Tibial artery (tissue), 4 donors: ENCODE measurements at regions of chr3 and their contacts with region 1.

Region 1: DNA sequence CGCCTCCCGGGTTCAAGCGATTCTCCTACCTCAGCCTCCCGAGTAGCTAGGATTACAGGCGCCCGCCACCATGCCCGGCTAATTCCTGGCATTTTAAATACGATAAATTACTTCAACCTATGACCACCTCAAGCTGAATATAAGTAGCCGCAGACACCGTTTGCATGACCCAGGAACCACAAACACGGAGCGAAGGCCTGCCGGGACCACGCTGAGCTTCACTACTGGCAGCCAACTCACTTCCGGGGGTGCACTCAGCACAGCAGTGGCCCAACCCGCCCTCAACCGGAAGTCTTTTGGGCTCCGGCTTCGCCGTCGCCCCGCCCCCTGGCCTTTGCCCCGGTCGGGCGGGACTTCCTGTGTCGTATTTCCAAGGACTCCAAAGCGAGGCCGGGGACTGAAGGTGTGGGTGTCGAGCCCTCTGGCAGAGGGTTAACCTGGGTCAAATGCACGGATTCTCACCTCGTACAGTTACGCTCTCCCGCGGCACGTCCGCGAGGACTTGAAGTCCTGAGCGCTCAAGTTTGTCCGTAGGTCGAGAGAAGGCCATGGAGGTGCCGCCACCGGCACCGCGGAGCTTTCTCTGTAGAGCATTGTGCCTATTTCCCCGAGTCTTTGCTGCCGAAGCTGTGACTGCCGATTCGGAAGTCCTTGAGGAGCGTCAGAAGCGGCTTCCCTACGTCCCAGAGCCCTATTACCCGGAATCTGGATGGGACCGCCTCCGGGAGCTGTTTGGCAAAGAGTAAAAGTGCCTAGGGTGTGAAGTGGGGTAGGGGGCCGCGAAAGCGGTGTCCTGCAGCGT is at the start of gene TIMMDC1:
- DNase-seq: peak; percentile 97 to 98
- H3K4me3 ChIP-seq: peak within 1 kb of the TSS; percentile 78 to 94
- H3K27ac ChIP-seq: peak within 1 kb of the TSS; percentile 87 to 96
- H3K4me1 ChIP-seq: peaks cover 0 to 38% (median 27%) of the 10 kb centered on the region in 4 donors
- H3K27me3 ChIP-seq: no peaks in the 10 kb centered on the region
- CTCF ChIP-seq: no peak

Region 2: GRCh38 chr3:119388577-119388976 is 109.8 kb before region 1 on chr3:
- intact Hi-C with region 1: no loop called
- DNase-seq: no peak
- H3K4me3 ChIP-seq: no peak overlapping the region
- H3K27ac ChIP-seq: no peak overlapping the region
- H3K4me1 ChIP-seq: no peaks in the 10 kb centered on the region
- H3K27me3 ChIP-seq: no peaks in the 10 kb centered on the region
- CTCF ChIP-seq: no peak

Region 3: GRCh38 chr3:119676771-119677640 is 178.6 kb after region 1 on chr3 and contains the start of gene COX17:
- intact Hi-C with region 1: loop called (anchors 10 kb)
- DNase-seq: peak; percentile 93 to 96
- H3K4me3 ChIP-seq: peak within 1 kb of the TSS; percentile 62 to 85
- H3K27ac ChIP-seq: peak within 1 kb of the TSS; percentile 81 to 86
- H3K4me1 ChIP-seq: peaks cover 0 to 17% (median 7%) of the 10 kb centered on the region in 4 donors
- H3K27me3 ChIP-seq: no peaks in the 10 kb centered on the region
- CTCF ChIP-seq: no peak

Region 4: DNA sequence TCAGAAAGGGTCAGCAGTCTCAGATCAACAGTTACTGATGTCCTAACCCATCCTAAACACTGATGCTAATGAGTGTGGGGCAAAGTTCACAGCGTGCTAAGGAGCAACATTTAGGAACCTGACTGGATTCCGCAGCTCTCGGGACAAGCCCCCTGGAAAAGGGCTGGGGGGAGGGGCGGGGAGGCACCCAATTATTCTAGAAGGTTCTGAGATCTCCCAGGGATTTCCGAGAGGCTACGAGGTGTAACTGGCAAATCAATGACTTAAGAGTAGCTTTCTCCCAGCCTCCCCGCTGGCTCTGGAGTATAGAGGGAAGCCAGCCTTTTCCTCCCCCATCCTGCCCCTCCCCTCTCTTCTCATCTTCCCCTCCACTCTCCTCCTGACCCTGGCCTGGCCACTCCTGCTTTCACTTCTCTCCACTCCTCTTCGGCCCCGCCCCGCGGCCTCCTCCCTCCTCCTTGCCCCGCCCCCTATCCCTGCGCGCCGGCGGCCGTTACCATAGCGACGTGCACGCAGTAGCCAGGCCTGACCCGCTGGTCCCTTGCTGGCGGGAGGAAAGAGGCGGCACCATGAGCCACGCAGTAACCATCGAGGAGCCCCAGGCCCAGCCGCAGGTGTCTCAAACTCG is 204.3 kb after region 1 on chr3 and contains the start of gene CFAP91:
- intact Hi-C with region 1: loop called (anchors 5 kb)
- DNase-seq: peak; percentile 98
- H3K4me3 ChIP-seq: peak within 1 kb of the TSS; percentile 53 to 64
- H3K27ac ChIP-seq: peak within 1 kb of the TSS; percentile 49 to 58
- H3K4me1 ChIP-seq: peaks cover 0 to 18% (median 7%) of the 10 kb centered on the region in 4 donors
- H3K27me3 ChIP-seq: no peaks in the 10 kb centered on the region
- CTCF ChIP-seq: no peak

Region 5: DNA sequence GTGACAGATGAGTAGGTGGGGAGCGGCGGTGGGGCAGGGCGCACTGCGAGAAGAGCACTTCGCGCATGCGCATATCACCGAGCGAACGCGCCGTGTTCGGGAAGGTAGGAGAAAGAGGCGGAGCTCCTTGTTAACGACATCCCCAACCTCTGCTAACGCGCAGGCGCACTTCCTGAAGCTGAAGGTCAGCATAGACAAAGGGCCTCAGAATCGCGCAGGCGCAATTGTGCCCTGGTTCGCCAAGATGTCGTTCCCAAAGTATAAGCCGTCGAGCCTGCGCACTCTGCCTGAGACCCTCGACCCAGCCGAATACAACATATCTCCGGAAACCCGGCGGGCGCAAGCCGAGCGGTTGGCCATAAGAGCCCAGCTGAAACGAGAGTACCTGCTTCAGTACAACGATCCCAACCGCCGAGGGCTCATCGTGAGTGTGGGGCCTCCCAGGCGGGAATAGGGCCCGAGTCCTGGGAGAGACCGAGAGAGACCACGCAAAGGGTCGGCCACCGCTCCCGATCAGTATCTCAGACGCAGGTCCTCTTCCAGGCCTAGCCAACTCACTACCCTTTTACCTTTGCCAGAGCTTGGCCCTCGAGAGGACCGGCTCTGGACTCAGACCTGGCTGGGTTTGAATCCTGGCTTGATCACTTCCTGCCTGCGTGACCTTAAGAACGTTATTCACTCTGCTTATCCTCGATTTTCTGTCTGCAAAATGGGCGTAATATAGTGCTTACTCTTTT is 1097.9 kb after region 1 on chr3 and contains the start of gene NDUFB4:
- intact Hi-C with region 1: loop called (anchors 10 kb)
- DNase-seq: peak; percentile 96 to 98
- H3K4me3 ChIP-seq: peak within 1 kb of the TSS; percentile 65 to 66
- H3K27ac ChIP-seq: peak within 1 kb of the TSS; percentile 81 to 83
- H3K4me1 ChIP-seq: peaks cover 0 to 44% (median 29%) of the 10 kb centered on the region in 4 donors
- H3K27me3 ChIP-seq: no peaks in the 10 kb centered on the region
- CTCF ChIP-seq: no peak